Activated CD4-positive, alpha-beta memory T cell treated with anti-CD3 and anti-CD28 coated beads for 36 hours (primary cell): ENCODE measurements at regions of chr10 and their contacts with region 1.

Region 1: GRCh38 chr10:28179006-28179742 is 123.7 kb downstream of the MPP7 start:
- DNase-seq: peak; percentile 22
- H3K4me3 Mint-ChIP-seq: no peak overlapping the region
- H3K27ac Mint-ChIP-seq: peak overlapping the region; percentile 72
- H3K4me1 Mint-ChIP-seq: peaks cover 37% of the 10 kb centered on the region
- H3K27me3 Mint-ChIP-seq: no peaks in the 10 kb centered on the region

Region 2: GRCh38 chr10:27558612-27559020 is 620.6 kb before region 1 on chr10:
- CTCF ChIA-PET with region 1: interaction called, 5 read pairs
- POLR2A ChIA-PET with region 1: no interaction called
- intact Hi-C with region 1: loop called (anchors 2 kb)
- DNase-seq: peak; percentile 42
- H3K4me3 Mint-ChIP-seq: no peak overlapping the region
- H3K27ac Mint-ChIP-seq: no peak overlapping the region
- H3K4me1 Mint-ChIP-seq: no peaks in the 10 kb centered on the region
- H3K27me3 Mint-ChIP-seq: no peaks in the 10 kb centered on the region

Region 3: GRCh38 chr10:27783660-27784059 is 395.5 kb before region 1 on chr10:
- CTCF ChIA-PET with region 1: interaction called, 9 read pairs
- POLR2A ChIA-PET with region 1: no interaction called
- intact Hi-C with region 1: loop called (anchors 1 kb)
- DNase-seq: peak; percentile 47
- H3K4me3 Mint-ChIP-seq: no peak overlapping the region
- H3K27ac Mint-ChIP-seq: no peak overlapping the region
- H3K4me1 Mint-ChIP-seq: no peaks in the 10 kb centered on the region
- H3K27me3 Mint-ChIP-seq: peaks cover 12% of the 10 kb centered on the region

Region 4: GRCh38 chr10:28087661-28088351 is 91.4 kb before region 1 on chr10:
- CTCF ChIA-PET with region 1: interaction called, 3 read pairs
- POLR2A ChIA-PET with region 1: no interaction called
- intact Hi-C with region 1: loop called (anchors 5 kb)
- DNase-seq: no peak
- H3K4me3 Mint-ChIP-seq: no peak overlapping the region
- H3K27ac Mint-ChIP-seq: peak overlapping the region; percentile 61
- H3K4me1 Mint-ChIP-seq: peaks cover 15% of the 10 kb centered on the region
- H3K27me3 Mint-ChIP-seq: no peaks in the 10 kb centered on the region

Region 5: GRCh38 chr10:28147706-28148105 is 31.5 kb before region 1 on chr10:
- CTCF ChIA-PET with region 1: no interaction called
- POLR2A ChIA-PET with region 1: no interaction called
- intact Hi-C with region 1: no loop called
- DNase-seq: no peak
- H3K4me3 Mint-ChIP-seq: no peak overlapping the region
- H3K27ac Mint-ChIP-seq: no peak overlapping the region
- H3K4me1 Mint-ChIP-seq: no peaks in the 10 kb centered on the region
- H3K27me3 Mint-ChIP-seq: no peaks in the 10 kb centered on the region

Region 6: DNA sequence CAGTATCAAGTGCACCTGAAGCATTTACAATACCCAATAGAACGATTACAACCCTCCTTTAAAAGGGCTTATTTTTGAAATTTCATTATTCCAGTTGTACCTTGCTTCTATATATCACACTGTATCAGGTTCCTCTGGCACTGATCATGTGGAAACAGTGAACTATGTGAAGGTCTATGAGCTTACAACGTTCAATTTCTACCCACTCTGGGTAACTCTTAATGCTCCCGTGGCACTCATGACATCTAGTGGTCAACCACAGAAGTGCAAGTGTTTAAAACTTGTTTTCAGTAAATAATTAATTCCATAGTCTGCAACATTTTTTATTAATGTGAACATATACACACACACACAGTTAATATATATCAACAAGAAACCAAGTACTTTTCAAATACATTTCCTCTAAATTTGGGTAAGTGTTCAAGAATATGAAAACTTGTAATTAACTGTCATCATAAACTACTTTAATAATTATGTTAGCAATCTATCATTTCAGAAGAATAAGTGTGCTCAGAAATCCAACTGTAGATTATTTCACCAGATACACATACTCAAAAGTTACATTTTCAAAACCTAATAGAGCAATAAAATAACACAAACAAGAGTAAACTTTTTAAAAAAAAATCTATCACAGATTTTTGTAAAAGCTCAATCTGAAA is 62.7 kb after region 1 on chr10:
- CTCF ChIA-PET with region 1: interaction called, 26 read pairs
- POLR2A ChIA-PET with region 1: no interaction called
- intact Hi-C with region 1: loop called (anchors 1 kb)
- DNase-seq: peak; percentile 37
- H3K4me3 Mint-ChIP-seq: no peak overlapping the region
- H3K27ac Mint-ChIP-seq: no peak overlapping the region
- H3K4me1 Mint-ChIP-seq: peaks cover 20% of the 10 kb centered on the region
- H3K27me3 Mint-ChIP-seq: no peaks in the 10 kb centered on the region

Region 7: GRCh38 chr10:28381903-28382347 is 202.8 kb after region 1 on chr10:
- CTCF ChIA-PET with region 1: interaction called, 12 read pairs
- POLR2A ChIA-PET with region 1: no interaction called
- intact Hi-C with region 1: loop called (anchors 5 kb)
- DNase-seq: peak; percentile 89
- H3K4me3 Mint-ChIP-seq: no peak overlapping the region
- H3K27ac Mint-ChIP-seq: no peak overlapping the region
- H3K4me1 Mint-ChIP-seq: peaks cover 28% of the 10 kb centered on the region
- H3K27me3 Mint-ChIP-seq: no peaks in the 10 kb centered on the region